Esophagus squamous epithelium (tissue), 5 donors: ENCODE measurements at regions of chr17 and their contacts with region 1.

Region 1: GRCh38 chr17:69607162-69607834 is 192.8 kb downstream of the MAP2K6 start:
- DNase-seq: no peak
- H3K4me3 ChIP-seq: no peak overlapping the region
- H3K27ac ChIP-seq: peak overlapping the region in 3 of 4 donors; percentile 44 to 62 (median 52)
- H3K4me1 ChIP-seq: peaks cover 0 to 38% (median 22%) of the 10 kb centered on the region in 3 donors
- H3K27me3 ChIP-seq: no peaks in the 10 kb centered on the region
- CTCF ChIP-seq: peak in 5 of 6 experiments; percentile 77 to 93 (median 90)
- POLR2A ChIP-seq: no peak

Region 2: DNA sequence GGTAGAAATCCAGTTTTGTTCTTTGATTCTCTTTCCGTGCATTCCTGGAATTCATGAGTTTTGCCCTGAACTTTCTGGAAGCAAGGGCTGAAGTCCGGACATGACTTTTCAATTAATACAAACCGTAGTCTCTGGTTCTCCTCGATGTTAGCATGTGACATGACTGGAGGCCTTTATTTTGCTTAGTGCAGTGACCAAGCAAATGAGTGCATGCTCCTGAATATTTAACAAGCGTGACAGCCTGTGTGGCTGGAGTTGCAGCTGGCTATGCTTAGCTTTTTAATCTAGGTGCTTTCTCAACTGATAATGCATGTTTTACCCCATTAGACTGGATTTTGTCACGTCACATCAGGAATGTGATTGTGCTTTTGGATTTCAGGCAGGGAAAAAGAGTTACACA is 109.3 kb after region 1 on chr17:
- intact Hi-C with region 1: no loop called
- DNase-seq: no peak
- H3K4me3 ChIP-seq: no peak overlapping the region
- H3K27ac ChIP-seq: no peak overlapping the region
- H3K4me1 ChIP-seq: peaks cover 0 to 20% (median 0%) of the 10 kb centered on the region in 3 donors
- H3K27me3 ChIP-seq: no peaks in the 10 kb centered on the region
- CTCF ChIP-seq: no peak
- POLR2A ChIP-seq: no peak

Region 3: GRCh38 chr17:70144260-70144846 is 537.1 kb after region 1 on chr17:
- intact Hi-C with region 1: loop called (anchors 10 kb)
- DNase-seq: no peak
- H3K4me3 ChIP-seq: no peak overlapping the region
- H3K27ac ChIP-seq: no peak overlapping the region
- H3K4me1 ChIP-seq: peaks cover 0 to 18% (median under 1%) of the 10 kb centered on the region in 3 donors
- H3K27me3 ChIP-seq: no peaks in the 10 kb centered on the region
- CTCF ChIP-seq: peak; percentile 24 to 81 (median 65)
- POLR2A ChIP-seq: no peak